GM12878 (cell line): ENCODE measurements at regions of chr22 and their contacts with region 1.

Region 1: GRCh38 chr22:19432133-19432851 is at the start of gene MRPL40:
- DNase-seq: peak; percentile 76
- ATAC-seq: peak; percentile 93
- H3K4me3 ChIP-seq: peak within 1 kb of the TSS; percentile 94
- H3K27ac ChIP-seq: peak within 1 kb of the TSS; percentile 93
- H3K4me1 ChIP-seq: no peaks in the 10 kb centered on the region
- H3K27me3 ChIP-seq: no peaks in the 10 kb centered on the region
- CTCF ChIP-seq: 0 out of 6 replicates have a peak, but pooled peaks of 1 of the 3 experiments have one; percentile 4
- EP300 ChIP-seq: peak in 1 of 2 experiments; percentile 16; a peak in 2 of 4 replicates
- POLR2A ChIP-seq: peak; percentile 93
- RAD21 ChIP-seq: no peak
- polyA plus RNA-seq, gene MRPL40: 180 to 207 TPM

Region 2: GRCh38 chr22:19291580-19292457 is 140.5 kb before region 1 on chr22 and contains the start of gene CLTCL1:
- CTCF ChIA-PET with region 1: no interaction called
- POLR2A ChIA-PET with region 1: no interaction called
- RAD21 ChIA-PET with region 1: no interaction called
- SMC1A ChIA-PET with region 1: interaction called, 3 read pairs
- in situ Hi-C with region 1: no loop called
- intact Hi-C with region 1: loop called (anchors 10 kb)
- DNase-seq: peak; percentile 21
- ATAC-seq: peak; percentile 82
- H3K4me3 ChIP-seq: peak within 1 kb of the TSS; percentile 96
- H3K27ac ChIP-seq: peak within 1 kb of the TSS; percentile 34; the same call in 1 of the 2 replicates
- H3K4me1 ChIP-seq: peaks cover 9% of the 10 kb centered on the region
- H3K27me3 ChIP-seq: peaks cover 7 to 15% of the 10 kb centered on the region in 2 experiments
- CTCF ChIP-seq: no peak
- EP300 ChIP-seq: no peak
- POLR2A ChIP-seq: peak; percentile 58
- RAD21 ChIP-seq: no peak
- polyA plus RNA-seq, gene CLTCL1: 0.04 TPM in 1 of 2 experiments, not detected in the other

Region 3: DNA sequence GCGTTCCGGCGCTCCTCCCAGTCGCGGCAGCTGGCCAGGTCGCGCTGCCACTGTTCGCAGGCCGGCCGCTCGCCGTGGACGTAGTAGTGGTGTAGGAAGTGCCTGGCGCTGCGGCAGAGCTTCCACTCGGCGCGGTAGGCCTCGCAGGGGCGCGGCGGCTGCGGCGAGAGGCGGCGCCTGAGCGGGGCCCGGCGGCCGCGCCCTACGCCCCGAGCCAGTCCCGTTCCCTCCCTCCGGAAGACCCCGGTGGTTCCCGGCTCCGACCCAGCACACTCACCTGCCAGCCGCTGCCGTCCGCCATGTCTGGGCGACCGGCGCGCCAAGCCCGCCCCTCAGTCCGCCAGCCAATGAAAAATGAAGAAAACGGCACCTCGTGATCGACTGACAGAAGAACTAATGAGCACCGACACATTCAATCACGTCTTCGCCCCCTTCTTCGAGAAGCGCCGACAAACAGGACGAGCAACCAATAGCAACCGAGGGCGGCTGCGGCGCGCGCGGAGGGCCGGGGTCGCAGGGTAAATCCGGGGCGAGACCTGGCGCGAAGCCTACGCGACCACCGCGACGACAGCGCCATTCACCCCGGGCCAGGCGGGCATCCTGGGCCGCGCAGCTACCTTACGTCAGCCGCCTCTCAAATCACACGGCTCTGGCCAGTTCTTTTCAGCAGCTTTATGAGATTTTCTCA is 15.2 kb after region 1 on chr22 and contains the start of gene C22orf39:
- CTCF ChIA-PET with region 1: interaction called, 9 read pairs
- POLR2A ChIA-PET with region 1: interaction called, 19 read pairs
- RAD21 ChIA-PET with region 1: interaction called, 4 read pairs
- SMC1A ChIA-PET with region 1: interaction called, 18 read pairs
- in situ Hi-C with region 1: no loop called
- intact Hi-C with region 1: loop called (anchors 1 kb)
- DNase-seq: peak; percentile 67
- ATAC-seq: peak; percentile 92
- H3K4me3 ChIP-seq: peak within 1 kb of the TSS; percentile 95
- H3K27ac ChIP-seq: peak within 1 kb of the TSS; percentile 85
- H3K4me1 ChIP-seq: peaks cover 17% of the 10 kb centered on the region
- H3K27me3 ChIP-seq: no peaks in the 10 kb centered on the region
- CTCF ChIP-seq: no peak
- EP300 ChIP-seq: no peak
- POLR2A ChIP-seq: peak; percentile 92
- RAD21 ChIP-seq: no peak
- polyA plus RNA-seq, gene C22orf39: 6.7 to 10.9 TPM